ENCODE measurements at regions of chr17 and their contacts with region 1.

Region 1: DNA sequence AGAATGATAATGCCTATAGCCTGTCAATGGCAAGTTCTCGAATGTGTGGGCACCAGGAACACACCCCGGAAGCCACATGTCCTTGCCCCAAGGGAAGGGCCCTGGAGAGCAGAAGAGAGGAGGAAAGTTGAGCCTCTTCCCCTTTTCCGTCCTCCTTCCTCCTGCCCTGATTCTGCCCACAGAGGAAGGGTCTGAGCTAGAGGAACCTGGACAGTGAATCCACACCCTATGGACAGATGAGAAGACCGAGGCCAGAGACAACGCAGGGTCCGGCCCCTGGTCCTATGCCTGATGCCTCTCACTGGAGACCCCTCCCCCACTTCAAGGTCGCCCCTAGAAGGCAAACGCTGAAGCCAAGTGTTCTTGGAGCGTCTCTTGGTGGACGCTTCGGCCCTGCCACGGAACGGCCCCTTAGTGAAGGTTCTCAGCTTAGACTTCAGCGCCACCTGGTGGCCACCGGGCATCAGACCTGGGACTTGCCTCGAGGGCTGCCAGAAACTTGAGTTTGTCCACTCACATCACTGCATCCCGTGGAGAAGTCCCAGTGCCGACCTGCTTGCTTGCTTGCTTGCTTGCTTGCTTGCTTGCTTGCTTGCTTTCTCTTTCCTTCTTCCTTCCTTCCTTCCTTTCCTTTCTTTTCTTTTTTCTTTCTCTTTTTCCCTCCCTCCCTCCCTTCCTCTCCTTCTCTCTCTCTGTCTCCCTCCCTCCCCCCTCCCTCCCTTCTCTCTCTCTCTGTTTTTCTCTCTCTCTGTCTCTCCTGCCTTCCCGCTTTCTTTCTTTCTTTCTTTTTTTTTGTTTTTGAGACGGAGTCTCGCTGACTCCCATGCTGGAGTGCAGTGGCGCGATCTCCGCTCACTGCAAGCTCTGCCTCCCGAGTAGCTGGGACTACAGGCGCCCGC is 20.6 kb upstream of the SPNS3 start:
- DNase-seq: peak; percentile 82 to 96 (median 92)
- ATAC-seq: peak; percentile 95
- H3K4me3 ChIP-seq: peak overlapping the region; percentile 36
- H3K4me3 Mint-ChIP-seq: peak overlapping the region; percentile 71
- H3K27ac ChIP-seq: no peak overlapping the region
- H3K27ac Mint-ChIP-seq: no peak overlapping the region
- H3K4me1 ChIP-seq: peaks cover 7% of the 10 kb centered on the region
- H3K4me1 Mint-ChIP-seq: peaks cover 5% of the 10 kb centered on the region
- H3K27me3 ChIP-seq: no peaks in the 10 kb centered on the region
- H3K27me3 Mint-ChIP-seq: no peaks in the 10 kb centered on the region
- CTCF ChIP-seq: peak; percentile 73

Region 2: GRCh38 chr17:4199818-4200402 is 213.3 kb before region 1 on chr17:
- CTCF ChIA-PET with region 1: interaction called, 16 read pairs
- POLR2A ChIA-PET with region 1: no interaction called
- intact Hi-C with region 1: loop called in 1 of 2 experiments (anchors 1 kb)
- DNase-seq: peak in 6 of 14 experiments; percentile 15 to 74 (median 44)
- ATAC-seq: peak; percentile 86
- H3K4me3 ChIP-seq: no peak overlapping the region
- H3K4me3 Mint-ChIP-seq: no peak overlapping the region
- H3K27ac ChIP-seq: no peak overlapping the region
- H3K27ac Mint-ChIP-seq: no peak overlapping the region
- H3K4me1 ChIP-seq: no peaks in the 10 kb centered on the region
- H3K4me1 Mint-ChIP-seq: peaks cover 4% of the 10 kb centered on the region
- H3K27me3 ChIP-seq: no peaks in the 10 kb centered on the region
- H3K27me3 Mint-ChIP-seq: no peaks in the 10 kb centered on the region
- CTCF ChIP-seq: peak; percentile 81

Region 3: GRCh38 chr17:4304417-4305027 is 108.7 kb before region 1 on chr17:
- CTCF ChIA-PET with region 1: interaction called, 4 read pairs
- POLR2A ChIA-PET with region 1: no interaction called
- intact Hi-C with region 1: loop called (anchors 1 kb)
- DNase-seq: peak in 13 of 14 experiments; percentile 8 to 82 (median 46)
- ATAC-seq: peak; percentile 93
- H3K4me3 ChIP-seq: no peak overlapping the region
- H3K4me3 Mint-ChIP-seq: no peak overlapping the region
- H3K27ac ChIP-seq: no peak overlapping the region
- H3K27ac Mint-ChIP-seq: peak overlapping the region; percentile 45
- H3K4me1 ChIP-seq: peaks cover 7% of the 10 kb centered on the region
- H3K4me1 Mint-ChIP-seq: peaks cover 34% of the 10 kb centered on the region
- H3K27me3 ChIP-seq: no peaks in the 10 kb centered on the region
- H3K27me3 Mint-ChIP-seq: no peaks in the 10 kb centered on the region
- CTCF ChIP-seq: peak; percentile 95

Measured in CD4-positive, alpha-beta T cell (primary cell).